Posterior vena cava (tissue), 2 donors: ENCODE measurements at regions of chr1 and their contacts with region 1.

Region 1: GRCh38 chr1:119179051-119179450 is 38.6 kb upstream of the WARS2 start:
- DNase-seq: no peak

Region 2: GRCh38 chr1:118788463-118788862 is 390.6 kb before region 1 on chr1:
- intact Hi-C with region 1: loop called in 1 of 2 experiments (anchors 5 kb)
- DNase-seq: no peak

Region 3: DNA sequence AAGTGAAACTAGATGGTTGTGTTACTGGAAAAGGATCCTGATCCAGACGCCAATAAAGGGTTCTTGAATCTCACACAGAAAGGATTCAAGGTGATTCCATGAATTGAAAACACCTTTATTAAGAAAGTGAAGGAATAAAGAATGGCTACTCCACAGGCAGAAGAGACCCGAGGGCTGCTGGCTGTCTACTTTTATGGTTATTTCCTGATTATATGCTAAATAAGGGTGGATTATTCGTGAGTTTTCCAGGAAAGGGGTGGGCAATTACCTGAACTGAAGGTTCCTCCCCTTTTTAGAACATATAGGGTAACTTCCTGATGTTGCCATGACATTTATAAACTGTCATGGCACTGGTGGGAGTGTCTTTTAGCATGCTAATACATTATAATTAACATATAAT is 12.3 kb after region 1 on chr1:
- intact Hi-C with region 1: loop called in 1 of 2 experiments (anchors 1 kb)
- DNase-seq: no peak